ENCODE measurements at regions of chr16 and their contacts with region 1.

Region 1: GRCh38 chr16:89171463-89172170 is at the start of gene CDH15:
- DNase-seq: peak; percentile 96
- H3K4me3 Mint-ChIP-seq: peak within 1 kb of the TSS; percentile 63
- H3K27ac Mint-ChIP-seq: no peak within 1 kb of the TSS
- H3K4me1 Mint-ChIP-seq: peaks cover 9% of the 10 kb centered on the region
- H3K27me3 Mint-ChIP-seq: peaks cover 3% of the 10 kb centered on the region
- total RNA-seq, gene CDH15: not detected

Region 2: GRCh38 chr16:88737298-88738150 is 434.1 kb before region 1 on chr16:
- CTCF ChIA-PET with region 1: interaction called, 10 read pairs
- intact Hi-C with region 1: loop called (anchors 2 kb)
- DNase-seq: peak; percentile 79
- H3K4me3 Mint-ChIP-seq: no peak overlapping the region
- H3K27ac Mint-ChIP-seq: no peak overlapping the region
- H3K4me1 Mint-ChIP-seq: peaks cover 3% of the 10 kb centered on the region
- H3K27me3 Mint-ChIP-seq: no peaks in the 10 kb centered on the region

Region 3: GRCh38 chr16:88844419-88845036 is 327.1 kb before region 1 on chr16:
- CTCF ChIA-PET with region 1: no interaction called
- intact Hi-C with region 1: no loop called
- DNase-seq: no peak
- H3K4me3 Mint-ChIP-seq: no peak overlapping the region
- H3K27ac Mint-ChIP-seq: no peak overlapping the region
- H3K4me1 Mint-ChIP-seq: no peaks in the 10 kb centered on the region
- H3K27me3 Mint-ChIP-seq: no peaks in the 10 kb centered on the region

Region 4: GRCh38 chr16:88941913-88942909 is 229.4 kb before region 1 on chr16:
- CTCF ChIA-PET with region 1: interaction called, 4 read pairs
- intact Hi-C with region 1: loop called (anchors 1 kb)
- DNase-seq: peak; percentile 61
- H3K4me3 Mint-ChIP-seq: peak overlapping the region; percentile 38
- H3K27ac Mint-ChIP-seq: no peak overlapping the region
- H3K4me1 Mint-ChIP-seq: peaks cover 2% of the 10 kb centered on the region
- H3K27me3 Mint-ChIP-seq: peaks cover 30% of the 10 kb centered on the region

Region 5: GRCh38 chr16:88957887-88958577 is 213.6 kb before region 1 on chr16:
- CTCF ChIA-PET with region 1: no interaction called
- intact Hi-C with region 1: no loop called
- DNase-seq: peak; percentile 29
- H3K4me3 Mint-ChIP-seq: no peak overlapping the region
- H3K27ac Mint-ChIP-seq: no peak overlapping the region
- H3K4me1 Mint-ChIP-seq: peaks cover 14% of the 10 kb centered on the region
- H3K27me3 Mint-ChIP-seq: peaks cover 29% of the 10 kb centered on the region

Region 6: GRCh38 chr16:89201439-89202377 is 30.1 kb after region 1 on chr16:
- CTCF ChIA-PET with region 1: no interaction called
- intact Hi-C with region 1: loop called (anchors 1 kb)
- DNase-seq: peak; percentile 89
- H3K4me3 Mint-ChIP-seq: peak overlapping the region; percentile 43
- H3K27ac Mint-ChIP-seq: no peak overlapping the region
- H3K4me1 Mint-ChIP-seq: peaks cover 12% of the 10 kb centered on the region
- H3K27me3 Mint-ChIP-seq: peaks cover 36% of the 10 kb centered on the region

Region 7: DNA sequence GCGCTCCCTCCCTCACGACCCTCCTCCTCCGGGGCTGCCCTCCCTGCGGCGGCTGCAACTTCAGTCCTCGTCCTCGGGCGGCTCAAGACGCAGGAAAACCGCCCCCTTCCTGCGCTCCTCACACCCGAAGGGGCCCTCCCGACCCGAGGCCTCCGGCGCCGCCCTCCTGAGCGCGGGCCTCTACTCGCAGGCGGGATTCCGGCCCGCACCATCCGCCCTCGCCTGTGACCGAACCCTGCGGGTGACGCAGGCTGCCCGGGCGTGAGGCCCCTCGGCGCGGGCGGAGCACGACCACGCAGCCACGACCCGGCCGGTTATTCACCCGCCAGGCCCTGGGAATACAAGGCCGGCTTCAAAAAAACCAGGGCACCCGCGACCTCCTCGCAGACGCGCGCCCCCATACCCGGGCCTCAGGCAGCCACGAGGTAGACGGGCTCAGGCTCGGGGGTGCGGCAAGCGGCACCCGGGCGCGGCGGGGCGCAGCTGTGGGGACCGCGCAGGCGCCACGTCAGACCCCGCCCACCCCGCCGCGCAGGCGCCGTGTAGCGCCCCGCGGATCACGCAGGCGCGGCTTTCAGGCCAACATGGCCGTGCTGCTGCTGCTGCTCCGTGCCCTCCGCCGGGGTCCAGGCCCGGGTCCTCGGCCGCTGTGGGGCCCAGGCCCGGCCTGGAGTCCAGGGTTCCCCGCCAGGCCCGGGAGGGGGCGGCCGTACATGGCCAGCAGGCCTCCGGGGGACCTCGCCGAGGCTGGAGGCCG is 336.4 kb after region 1 on chr16 and contains the start of gene SPG7:
- CTCF ChIA-PET with region 1: no interaction called
- intact Hi-C with region 1: loop called (anchors 2 kb)
- DNase-seq: peak; percentile 86
- H3K4me3 Mint-ChIP-seq: peak within 1 kb of the TSS; percentile 88
- H3K27ac Mint-ChIP-seq: peak within 1 kb of the TSS; percentile 89
- H3K4me1 Mint-ChIP-seq: peaks cover 31% of the 10 kb centered on the region
- H3K27me3 Mint-ChIP-seq: no peaks in the 10 kb centered on the region
- total RNA-seq, gene SPG7: 62.4 to 67.7 TPM

Measured in activated naive CD4-positive, alpha-beta T cell treated with anti-CD3 and anti-CD28 coated beads for 36 hours (primary cell).